H1 (cell line): ENCODE measurements at regions of chr5 and their contacts with region 1.

Region 1: GRCh38 chr5:133423618-133424282 is 188.6 kb downstream of the FSTL4 start:
- DNase-seq: peak; percentile 53 to 97
- H3K4me3 ChIP-seq: no peak overlapping the region
- H3K27ac ChIP-seq: no peak overlapping the region
- H3K4me1 ChIP-seq: peaks cover 8 to 27% (median 18%) of the 10 kb centered on the region in 4 experiments
- H3K27me3 ChIP-seq: peaks cover 3 to 10% (median 7%) of the 10 kb centered on the region in 4 experiments
- CTCF ChIP-seq: peak; percentile 93 to 95 (median 94)
- EP300 ChIP-seq: no peak
- POLR2A ChIP-seq: no peak
- RAD21 ChIP-seq: peak; percentile 86 to 91

Region 2: DNA sequence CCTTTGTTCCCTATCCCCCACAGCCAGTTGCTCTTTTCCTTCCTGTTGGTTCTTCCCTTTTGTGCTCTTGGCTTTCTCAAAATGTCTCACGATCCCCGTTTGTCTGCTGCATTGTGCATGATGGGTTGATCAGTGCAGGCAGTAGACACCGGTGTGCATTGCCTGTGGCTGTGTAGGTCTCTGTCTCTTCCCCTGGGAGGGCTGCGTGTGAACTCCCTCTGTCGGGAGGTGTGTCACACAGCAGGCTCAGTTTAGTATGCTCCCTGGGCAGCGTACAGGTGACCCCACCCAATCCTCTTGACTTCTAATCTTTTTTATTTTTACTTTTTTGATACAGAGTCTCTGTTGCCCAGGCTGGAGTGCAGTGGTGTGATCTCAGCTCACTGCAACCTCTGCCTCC is 76.7 kb before region 1 on chr5:
- CTCF ChIA-PET with region 1: interaction called, 21 read pairs
- POLR2A ChIA-PET with region 1: no interaction called
- DNase-seq: no peak
- H3K4me3 ChIP-seq: no peak overlapping the region
- H3K27ac ChIP-seq: no peak overlapping the region
- H3K4me1 ChIP-seq: peaks cover 0 to 10% (median 3%) of the 10 kb centered on the region in 4 experiments; a peak in 4 of 7 replicates
- H3K27me3 ChIP-seq: no peaks in the 10 kb centered on the region
- CTCF ChIP-seq: peak; percentile 30 to 38 (median 34)
- EP300 ChIP-seq: no peak
- POLR2A ChIP-seq: no peak
- RAD21 ChIP-seq: peak; percentile 27 to 43

Region 3: GRCh38 chr5:133398646-133399101 is 25.1 kb before region 1 on chr5:
- CTCF ChIA-PET with region 1: interaction called, 122 read pairs
- POLR2A ChIA-PET with region 1: no interaction called
- DNase-seq: no peak
- H3K4me3 ChIP-seq: no peak overlapping the region
- H3K27ac ChIP-seq: no peak overlapping the region
- H3K4me1 ChIP-seq: peaks cover 3 to 19% (median 11%) of the 10 kb centered on the region in 4 experiments; a peak in 5 of 7 replicates
- H3K27me3 ChIP-seq: no peaks in the 10 kb centered on the region
- CTCF ChIP-seq: no peak
- EP300 ChIP-seq: no peak
- POLR2A ChIP-seq: no peak
- RAD21 ChIP-seq: no peak

Region 4: GRCh38 chr5:133440467-133441115 is 16.8 kb after region 1 on chr5:
- CTCF ChIA-PET with region 1: interaction called, 32 read pairs
- POLR2A ChIA-PET with region 1: interaction called, 6 read pairs
- DNase-seq: no peak
- H3K4me3 ChIP-seq: no peak overlapping the region
- H3K27ac ChIP-seq: no peak overlapping the region
- H3K4me1 ChIP-seq: peaks cover 0 to 2% (median 0%) of the 10 kb centered on the region in 4 experiments; a peak in 1 of 7 replicates
- H3K27me3 ChIP-seq: no peaks in the 10 kb centered on the region
- CTCF ChIP-seq: no peak
- EP300 ChIP-seq: no peak
- POLR2A ChIP-seq: no peak
- RAD21 ChIP-seq: no peak

Region 5: DNA sequence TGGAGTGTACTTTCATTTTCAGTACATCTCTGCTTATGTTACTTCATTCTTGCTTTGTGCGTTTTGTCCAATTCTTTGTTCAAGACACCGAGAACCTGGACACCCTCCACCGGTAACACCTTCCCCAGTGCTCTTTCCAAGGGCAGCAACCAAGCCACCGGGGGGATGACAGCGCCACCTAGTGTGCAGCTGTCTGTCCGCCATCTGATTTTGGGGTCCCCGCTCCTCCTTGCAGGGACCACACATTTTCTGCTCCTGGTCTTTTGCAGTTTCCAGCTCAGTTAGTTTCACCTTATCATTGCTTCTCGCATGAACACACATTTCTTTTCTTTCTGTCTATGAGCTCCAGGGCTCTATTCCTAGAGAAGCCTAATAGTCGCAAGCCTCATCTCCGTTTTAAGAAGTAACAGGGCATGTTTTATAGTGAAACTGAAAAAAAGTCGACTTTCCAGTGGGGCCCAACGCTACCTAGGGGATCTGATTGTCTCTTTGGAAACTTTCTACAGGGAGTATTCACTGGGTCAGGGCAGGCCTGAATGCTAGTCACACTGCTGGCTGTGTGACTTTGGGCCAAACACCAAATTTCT is 36.5 kb after region 1 on chr5:
- CTCF ChIA-PET with region 1: interaction called, 218 read pairs
- POLR2A ChIA-PET with region 1: interaction called, 3 read pairs
- DNase-seq: peak; percentile 31 to 90
- H3K4me3 ChIP-seq: no peak overlapping the region
- H3K27ac ChIP-seq: no peak overlapping the region
- H3K4me1 ChIP-seq: peaks cover 0 to 5% (median 2%) of the 10 kb centered on the region in 4 experiments; a peak in 2 of 7 replicates
- H3K27me3 ChIP-seq: no peaks in the 10 kb centered on the region
- CTCF ChIP-seq: peak; percentile 94 to 97 (median 96)
- EP300 ChIP-seq: no peak
- POLR2A ChIP-seq: no peak
- RAD21 ChIP-seq: peak; percentile 89 to 90

Region 6: DNA sequence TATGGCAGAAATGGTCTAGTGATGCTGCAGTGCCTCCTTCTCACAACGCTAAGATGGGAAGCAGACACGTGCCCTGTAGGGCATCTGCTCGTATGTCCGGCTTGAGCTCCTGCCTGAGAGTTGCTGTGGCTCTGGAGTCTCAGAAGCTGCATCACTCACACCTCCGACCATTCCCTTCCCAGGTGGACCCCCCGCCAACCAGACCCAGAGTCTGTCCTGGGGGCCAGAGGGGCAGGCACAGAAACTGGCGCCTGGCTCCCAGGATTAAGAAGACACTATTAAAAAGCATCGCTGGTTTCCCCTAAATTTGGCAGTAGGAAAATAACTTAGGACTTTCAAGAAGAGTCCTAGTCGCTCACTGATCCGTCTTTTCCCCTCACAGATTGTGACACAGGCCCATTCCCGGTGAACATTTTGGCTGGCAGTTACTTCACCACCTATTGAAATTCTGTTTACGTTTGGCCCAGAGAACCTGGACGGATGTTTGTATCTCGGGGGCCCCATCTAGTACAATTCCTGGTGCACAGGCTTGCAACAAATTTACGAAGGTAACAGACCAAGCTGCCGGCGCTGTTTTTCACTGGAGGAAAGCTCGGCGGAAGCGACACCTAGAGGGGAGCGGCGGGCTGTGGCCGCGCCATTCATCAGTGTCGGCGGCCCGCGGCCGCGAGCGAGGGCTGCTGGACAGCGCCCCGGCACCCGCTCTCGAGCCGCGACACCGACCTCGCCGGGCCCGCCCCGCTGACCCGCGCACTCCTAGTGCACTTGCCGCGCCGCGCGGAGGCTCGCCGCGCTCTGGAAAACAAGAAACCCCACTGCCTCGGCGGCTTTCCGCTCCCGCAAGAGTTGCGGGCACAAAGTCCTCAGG is 187.0 kb after region 1 on chr5:
- CTCF ChIA-PET with region 1: interaction called, 55 read pairs
- POLR2A ChIA-PET with region 1: interaction called, 4 read pairs
- DNase-seq: peak in 1 of 2 experiments; percentile 50
- H3K4me3 ChIP-seq: peak overlapping the region; percentile 23 to 62 (median 55); a peak in 7 of 8 replicates
- H3K27ac ChIP-seq: no peak overlapping the region
- H3K4me1 ChIP-seq: peaks cover 0 to 9% (median 3%) of the 10 kb centered on the region in 4 experiments; a peak in 5 of 7 replicates
- H3K27me3 ChIP-seq: peaks cover 19 to 60% (median 44%) of the 10 kb centered on the region in 4 experiments
- CTCF ChIP-seq: peak; percentile 60 to 79 (median 61)
- EP300 ChIP-seq: no peak
- POLR2A ChIP-seq: no peak
- RAD21 ChIP-seq: peak; percentile 62 to 74

Region 7: GRCh38 chr5:133944263-133945185 is 520.8 kb after region 1 on chr5:
- CTCF ChIA-PET with region 1: interaction called, 18 read pairs
- POLR2A ChIA-PET with region 1: no interaction called
- DNase-seq: peak in 1 of 2 experiments; percentile 85
- H3K4me3 ChIP-seq: no peak overlapping the region
- H3K27ac ChIP-seq: no peak overlapping the region
- H3K4me1 ChIP-seq: no peaks in the 10 kb centered on the region
- H3K27me3 ChIP-seq: no peaks in the 10 kb centered on the region
- CTCF ChIP-seq: peak; percentile 84 to 98 (median 92)
- EP300 ChIP-seq: no peak
- POLR2A ChIP-seq: no peak
- RAD21 ChIP-seq: peak; percentile 97 to 98